ENCODE measurements at regions of chr18 and their contacts with region 1.

Region 1: DNA sequence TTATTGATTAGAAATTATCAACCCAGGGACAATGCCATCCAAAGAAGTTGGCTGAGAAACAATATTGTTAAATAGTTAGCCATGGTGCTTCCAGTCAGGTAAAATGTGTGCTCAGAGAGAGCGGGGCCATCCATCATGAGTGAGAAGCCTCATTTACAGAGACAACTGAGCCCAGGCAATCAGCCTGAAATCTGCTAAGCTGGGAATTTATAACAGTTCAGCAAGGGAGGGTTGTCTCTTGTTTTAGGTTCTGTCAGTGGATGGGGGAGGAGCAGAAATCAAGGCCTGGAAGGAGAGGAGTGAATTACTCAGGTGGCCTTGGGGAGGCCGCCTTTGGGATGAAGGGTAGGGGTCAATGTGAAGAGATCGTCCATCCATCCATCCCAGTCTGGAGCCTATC is 102.5 kb upstream of the ST8SIA3 start:
- H3K4me3 Mint-ChIP-seq: no peak overlapping the region
- H3K27ac Mint-ChIP-seq: no peak overlapping the region
- H3K4me1 Mint-ChIP-seq: no peaks in the 10 kb centered on the region
- H3K27me3 Mint-ChIP-seq: peaks cover 2% of the 10 kb centered on the region

Region 2: GRCh38 chr18:57276739-57277298 is 26.9 kb after region 1 on chr18:
- intact Hi-C with region 1: no loop called
- H3K4me3 Mint-ChIP-seq: no peak overlapping the region
- H3K27ac Mint-ChIP-seq: no peak overlapping the region
- H3K4me1 Mint-ChIP-seq: no peaks in the 10 kb centered on the region
- H3K27me3 Mint-ChIP-seq: no peaks in the 10 kb centered on the region

Region 3: DNA sequence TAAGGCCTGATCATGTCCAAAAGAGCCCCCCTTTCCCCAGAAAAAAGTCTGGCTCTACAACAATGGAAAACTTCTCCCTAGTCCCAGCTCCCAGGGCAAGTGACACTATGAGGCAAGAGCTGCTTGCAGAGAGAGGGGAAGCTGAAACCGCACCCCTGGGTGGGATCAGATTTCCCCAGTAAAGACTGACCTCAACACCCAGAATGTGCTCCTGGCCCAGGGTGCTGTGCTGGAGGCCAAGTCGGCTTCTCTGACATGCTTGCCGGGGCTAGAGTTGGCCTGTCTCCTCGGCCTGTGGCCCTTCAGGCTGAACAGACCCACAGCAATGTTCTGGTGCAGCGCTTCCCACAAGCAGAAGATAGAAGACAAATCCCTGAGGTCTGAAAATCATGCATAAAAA is 84.1 kb after region 1 on chr18:
- intact Hi-C with region 1: loop called (anchors 10 kb)
- H3K4me3 Mint-ChIP-seq: no peak overlapping the region
- H3K27ac Mint-ChIP-seq: no peak overlapping the region
- H3K4me1 Mint-ChIP-seq: no peaks in the 10 kb centered on the region
- H3K27me3 Mint-ChIP-seq: peaks cover 8% of the 10 kb centered on the region